H1 (cell line): ENCODE measurements at regions of chr10 and their contacts with region 1.

Region 1: DNA sequence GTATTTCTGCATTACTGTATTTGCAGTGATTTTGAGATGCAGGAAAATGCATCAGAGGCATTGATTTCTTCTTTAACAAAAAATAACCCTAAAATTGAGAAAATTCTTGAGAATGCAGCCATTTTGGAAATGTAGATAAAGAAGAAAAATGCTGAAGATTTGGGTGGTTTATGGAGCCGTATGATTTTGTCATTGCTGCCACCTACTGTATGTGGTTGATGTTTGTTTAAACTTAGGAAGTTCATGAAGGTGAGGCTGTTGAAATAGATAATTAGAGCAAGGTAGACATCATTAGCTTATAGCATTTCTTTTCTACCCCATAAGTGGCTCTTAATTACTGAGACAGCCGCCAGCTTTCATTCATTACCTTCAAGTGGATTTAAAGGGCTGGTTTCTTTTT is 92.1 kb upstream of the SAMD8 start:
- DNase-seq: no peak
- H3K4me3 ChIP-seq: no peak overlapping the region
- H3K27ac ChIP-seq: no peak overlapping the region
- H3K4me1 ChIP-seq: peaks cover 0 to 4% (median 2%) of the 10 kb centered on the region in 4 experiments; a peak in 1 of 7 replicates
- H3K27me3 ChIP-seq: no peaks in the 10 kb centered on the region
- CTCF ChIP-seq: no peak; a peak in 1 of 4 replicates
- EP300 ChIP-seq: no peak
- POLR2A ChIP-seq: no peak
- RAD21 ChIP-seq: peak; percentile 58 to 60

Region 2: GRCh38 chr10:74244097-74244685 is 775.2 kb before region 1 on chr10:
- CTCF ChIA-PET with region 1: interaction called, 12 read pairs
- POLR2A ChIA-PET with region 1: no interaction called
- DNase-seq: no peak
- H3K4me3 ChIP-seq: no peak overlapping the region
- H3K27ac ChIP-seq: no peak overlapping the region
- H3K4me1 ChIP-seq: no peaks in the 10 kb centered on the region
- H3K27me3 ChIP-seq: no peaks in the 10 kb centered on the region
- CTCF ChIP-seq: peak in 1 of 3 experiments; percentile 16; a peak in 2 of 4 replicates
- EP300 ChIP-seq: no peak
- POLR2A ChIP-seq: no peak
- RAD21 ChIP-seq: peak in 1 of 2 experiments; percentile 49

Region 3: DNA sequence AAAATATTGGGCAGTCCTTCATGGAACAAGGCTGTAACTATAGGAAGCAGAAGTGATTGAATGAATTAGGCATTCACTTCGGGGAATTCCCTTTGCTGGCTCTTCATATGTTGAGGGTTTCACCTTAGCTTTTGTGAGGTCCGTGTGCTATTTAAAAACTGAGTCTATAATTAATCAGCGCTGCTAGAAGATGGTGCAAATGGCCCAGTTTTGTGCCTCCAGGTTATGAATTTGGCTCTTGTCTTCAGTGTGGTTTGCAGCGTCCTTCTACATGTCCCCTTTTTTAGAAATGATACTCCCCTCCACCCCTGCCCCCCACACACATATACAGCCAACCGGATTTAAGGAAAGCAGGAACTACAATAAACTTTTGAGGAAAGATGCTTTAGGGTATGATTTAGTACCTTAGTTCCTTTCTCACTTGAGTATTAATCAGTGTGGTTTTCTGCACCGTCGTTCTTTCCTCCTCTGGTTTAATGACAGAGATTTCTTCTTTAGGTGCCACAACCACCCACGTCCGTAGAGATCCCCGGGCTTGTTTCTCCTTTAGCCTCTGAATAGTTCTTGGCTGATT is 18.5 kb before region 1 on chr10:
- CTCF ChIA-PET with region 1: interaction called, 10 read pairs
- POLR2A ChIA-PET with region 1: no interaction called
- DNase-seq: no peak
- H3K4me3 ChIP-seq: no peak overlapping the region
- H3K27ac ChIP-seq: no peak overlapping the region
- H3K4me1 ChIP-seq: peaks cover 0 to 2% (median 0%) of the 10 kb centered on the region in 4 experiments; a peak in 1 of 7 replicates
- H3K27me3 ChIP-seq: no peaks in the 10 kb centered on the region
- CTCF ChIP-seq: no peak
- EP300 ChIP-seq: no peak
- POLR2A ChIP-seq: no peak
- RAD21 ChIP-seq: no peak

Region 4: GRCh38 chr10:75034131-75034512 is 14.8 kb after region 1 on chr10:
- CTCF ChIA-PET with region 1: interaction called, 11 read pairs
- POLR2A ChIA-PET with region 1: no interaction called
- DNase-seq: no peak
- H3K4me3 ChIP-seq: no peak overlapping the region
- H3K27ac ChIP-seq: no peak overlapping the region
- H3K4me1 ChIP-seq: no peaks in the 10 kb centered on the region
- H3K27me3 ChIP-seq: no peaks in the 10 kb centered on the region; a peak in 1 of 7 replicates
- CTCF ChIP-seq: no peak
- EP300 ChIP-seq: no peak
- POLR2A ChIP-seq: no peak
- RAD21 ChIP-seq: no peak

Region 5: DNA sequence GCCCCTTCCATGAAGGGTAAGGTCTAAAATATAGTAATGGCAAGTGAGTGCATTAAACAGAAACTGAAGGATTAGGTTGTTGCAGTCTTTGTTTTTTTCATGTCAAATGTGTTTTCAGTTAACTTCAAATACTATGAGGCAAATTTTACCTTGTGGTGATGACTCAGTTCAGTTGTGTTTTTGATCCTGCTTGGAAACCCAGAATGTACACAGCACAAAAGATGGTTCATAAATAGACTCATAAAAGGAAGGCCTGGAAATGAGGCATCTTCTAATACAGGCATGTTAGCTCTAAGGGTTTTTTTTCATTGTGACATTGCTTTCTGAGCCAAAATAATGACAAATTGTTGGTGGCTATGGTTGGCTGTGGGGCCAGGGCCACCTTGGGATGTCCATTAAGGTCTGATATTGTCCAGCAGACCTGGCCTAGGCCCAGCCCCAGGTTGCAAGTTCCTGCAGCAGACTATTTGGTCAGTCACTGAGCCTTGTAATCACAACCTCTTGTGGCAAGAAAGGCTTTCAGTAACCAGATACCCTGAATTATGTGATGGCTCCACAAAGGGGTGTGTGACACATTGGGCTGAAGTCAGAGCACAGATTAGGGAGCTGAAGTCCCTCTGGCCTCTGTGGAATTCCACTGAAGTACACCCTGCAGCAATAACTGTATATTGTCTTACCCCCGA is 23.1 kb after region 1 on chr10:
- CTCF ChIA-PET with region 1: interaction called, 10 read pairs
- POLR2A ChIA-PET with region 1: no interaction called
- DNase-seq: no peak
- H3K4me3 ChIP-seq: no peak overlapping the region
- H3K27ac ChIP-seq: no peak overlapping the region
- H3K4me1 ChIP-seq: no peaks in the 10 kb centered on the region
- H3K27me3 ChIP-seq: no peaks in the 10 kb centered on the region
- CTCF ChIP-seq: no peak
- EP300 ChIP-seq: no peak
- POLR2A ChIP-seq: no peak
- RAD21 ChIP-seq: no peak